ENCODE measurements at regions of chr1 and their contacts with region 1.

Region 1: DNA sequence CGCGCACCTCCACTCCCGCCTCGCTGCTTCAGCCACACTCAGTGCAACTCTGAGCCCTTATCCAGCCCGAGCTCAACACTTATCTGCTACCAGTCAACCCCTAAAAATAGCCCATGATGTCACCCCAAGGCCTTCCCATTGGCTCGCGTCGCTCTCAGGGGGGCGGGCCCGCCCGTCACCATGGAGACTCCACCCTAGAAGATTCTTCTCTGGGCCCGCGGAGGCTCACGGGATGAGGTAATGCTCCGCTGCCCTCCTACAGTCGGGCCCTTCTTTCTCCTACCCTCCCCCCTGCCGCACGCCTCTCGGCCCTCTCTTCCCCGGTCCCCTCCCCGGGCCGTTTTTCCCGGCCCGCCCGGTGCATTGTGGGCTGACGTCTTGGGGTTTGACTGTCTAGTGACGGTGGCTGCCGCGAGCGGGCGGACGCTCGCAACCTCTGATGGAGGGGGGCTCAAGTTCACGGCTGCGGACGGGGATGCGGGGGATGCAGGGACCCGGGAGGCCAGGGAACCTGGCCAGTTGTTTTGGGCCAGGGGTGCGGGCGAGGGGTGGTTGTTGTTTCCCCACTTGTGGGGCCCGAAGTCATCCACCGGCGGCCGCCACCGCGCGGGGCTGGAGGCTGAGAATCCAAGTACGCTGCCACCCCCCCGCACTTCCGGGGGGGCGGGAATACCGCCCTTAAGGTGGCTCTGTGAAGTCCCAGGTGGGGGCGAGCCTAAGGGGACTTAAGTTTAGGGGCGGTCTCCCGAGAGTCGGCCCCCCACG is at the start of gene JUN:
- DNase-seq: peak; percentile 97
- ATAC-seq: peak; percentile 84
- H3K4me3 ChIP-seq: peak within 1 kb of the TSS; percentile 86
- H3K27ac ChIP-seq: peak within 1 kb of the TSS; percentile 90
- H3K4me1 ChIP-seq: peaks cover 11% of the 10 kb centered on the region
- H3K27me3 ChIP-seq: no peaks in the 10 kb centered on the region
- CTCF ChIP-seq: 0 out of 6 replicates have a peak, but pooled peaks of 1 of the 3 experiments have one; percentile 1
- EP300 ChIP-seq: peak in 1 of 2 experiments; percentile 62; a peak in 2 of 4 replicates
- POLR2A ChIP-seq: peak; percentile 99
- RAD21 ChIP-seq: no peak
- polyA plus RNA-seq, gene JUN: 0.18 to 0.37 TPM

Region 2: GRCh38 chr1:58611861-58612385 is 172.3 kb before region 1 on chr1:
- CTCF ChIA-PET with region 1: no interaction called
- POLR2A ChIA-PET with region 1: no interaction called
- RAD21 ChIA-PET with region 1: no interaction called
- SMC1A ChIA-PET with region 1: no interaction called
- in situ Hi-C with region 1: no loop called
- intact Hi-C with region 1: no loop called
- DNase-seq: no peak
- ATAC-seq: no peak
- H3K4me3 ChIP-seq: no peak overlapping the region
- H3K27ac ChIP-seq: no peak overlapping the region
- H3K4me1 ChIP-seq: no peaks in the 10 kb centered on the region
- H3K27me3 ChIP-seq: no peaks in the 10 kb centered on the region; a peak in 1 of 4 replicates
- CTCF ChIP-seq: no peak
- EP300 ChIP-seq: no peak
- POLR2A ChIP-seq: no peak
- RAD21 ChIP-seq: no peak

Region 3: GRCh38 chr1:58748666-58749065 is 35.5 kb before region 1 on chr1:
- CTCF ChIA-PET with region 1: no interaction called
- POLR2A ChIA-PET with region 1: no interaction called
- RAD21 ChIA-PET with region 1: no interaction called
- SMC1A ChIA-PET with region 1: no interaction called
- in situ Hi-C with region 1: no loop called
- intact Hi-C with region 1: no loop called
- DNase-seq: no peak
- ATAC-seq: no peak
- H3K4me3 ChIP-seq: no peak overlapping the region
- H3K27ac ChIP-seq: no peak overlapping the region
- H3K4me1 ChIP-seq: no peaks in the 10 kb centered on the region
- H3K27me3 ChIP-seq: peaks cover 0 to 3% of the 10 kb centered on the region in 2 experiments; a peak in 2 of 4 replicates
- CTCF ChIP-seq: no peak
- EP300 ChIP-seq: no peak
- POLR2A ChIP-seq: no peak
- RAD21 ChIP-seq: no peak

Region 4: GRCh38 chr1:58857680-58858673 is 73.8 kb after region 1 on chr1:
- CTCF ChIA-PET with region 1: interaction called, 6 read pairs
- POLR2A ChIA-PET with region 1: interaction called, 3 read pairs
- RAD21 ChIA-PET with region 1: interaction called, 10 read pairs
- SMC1A ChIA-PET with region 1: interaction called, 8 read pairs
- in situ Hi-C with region 1: no loop called
- intact Hi-C with region 1: loop called (anchors 2 kb)
- DNase-seq: peak; percentile 67
- ATAC-seq: peak; percentile 92
- H3K4me3 ChIP-seq: no peak overlapping the region
- H3K27ac ChIP-seq: peak overlapping the region; percentile 27; the same call in 1 of the 2 replicates
- H3K4me1 ChIP-seq: peaks cover 34% of the 10 kb centered on the region
- H3K27me3 ChIP-seq: no peaks in the 10 kb centered on the region
- CTCF ChIP-seq: no peak
- EP300 ChIP-seq: peak in 1 of 2 experiments; percentile 40; a peak in 1 of 4 replicates
- POLR2A ChIP-seq: no peak
- RAD21 ChIP-seq: no peak

Region 5: DNA sequence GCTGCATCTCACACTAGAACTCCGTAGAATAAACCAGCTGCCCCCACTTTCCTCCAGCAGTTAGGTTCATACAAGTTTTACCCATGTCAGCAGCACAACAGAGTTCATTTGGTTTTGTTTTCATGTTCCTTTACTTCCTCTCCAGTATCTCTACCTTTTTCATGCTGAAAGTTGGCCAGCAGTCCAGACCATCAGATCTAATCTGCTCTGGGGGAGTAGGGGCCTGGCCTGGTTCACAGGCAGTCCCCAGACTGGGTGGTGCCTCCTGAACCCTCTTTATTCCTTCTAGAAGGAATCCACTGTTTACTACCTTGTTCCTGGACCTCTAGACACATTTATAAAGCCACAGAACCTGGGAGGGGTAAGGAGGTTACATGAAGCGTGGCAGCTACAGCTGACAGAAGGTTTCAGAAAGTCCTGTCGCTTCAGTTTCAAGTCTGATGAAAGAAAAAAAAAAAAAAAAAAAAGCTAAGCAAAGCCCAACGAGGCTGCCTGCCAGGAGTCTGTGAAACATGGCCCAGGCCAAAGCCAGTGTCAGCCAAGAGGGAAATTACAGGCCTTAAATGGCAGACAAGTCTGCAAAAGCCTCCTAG is 184.3 kb after region 1 on chr1:
- CTCF ChIA-PET with region 1: no interaction called
- POLR2A ChIA-PET with region 1: no interaction called
- RAD21 ChIA-PET with region 1: interaction called, 3 read pairs
- SMC1A ChIA-PET with region 1: interaction called, 6 read pairs
- in situ Hi-C with region 1: no loop called
- intact Hi-C with region 1: loop called (anchors 5 kb)
- DNase-seq: peak; percentile 92
- ATAC-seq: peak; percentile 92
- H3K4me3 ChIP-seq: peak overlapping the region; percentile 58
- H3K27ac ChIP-seq: peak overlapping the region; percentile 94
- H3K4me1 ChIP-seq: peaks cover 27% of the 10 kb centered on the region
- H3K27me3 ChIP-seq: no peaks in the 10 kb centered on the region
- CTCF ChIP-seq: no peak
- EP300 ChIP-seq: peak; percentile 22 to 29; a peak in 1 of 4 replicates
- POLR2A ChIP-seq: peak; percentile 64
- RAD21 ChIP-seq: peak; percentile 37

Region 6: DNA sequence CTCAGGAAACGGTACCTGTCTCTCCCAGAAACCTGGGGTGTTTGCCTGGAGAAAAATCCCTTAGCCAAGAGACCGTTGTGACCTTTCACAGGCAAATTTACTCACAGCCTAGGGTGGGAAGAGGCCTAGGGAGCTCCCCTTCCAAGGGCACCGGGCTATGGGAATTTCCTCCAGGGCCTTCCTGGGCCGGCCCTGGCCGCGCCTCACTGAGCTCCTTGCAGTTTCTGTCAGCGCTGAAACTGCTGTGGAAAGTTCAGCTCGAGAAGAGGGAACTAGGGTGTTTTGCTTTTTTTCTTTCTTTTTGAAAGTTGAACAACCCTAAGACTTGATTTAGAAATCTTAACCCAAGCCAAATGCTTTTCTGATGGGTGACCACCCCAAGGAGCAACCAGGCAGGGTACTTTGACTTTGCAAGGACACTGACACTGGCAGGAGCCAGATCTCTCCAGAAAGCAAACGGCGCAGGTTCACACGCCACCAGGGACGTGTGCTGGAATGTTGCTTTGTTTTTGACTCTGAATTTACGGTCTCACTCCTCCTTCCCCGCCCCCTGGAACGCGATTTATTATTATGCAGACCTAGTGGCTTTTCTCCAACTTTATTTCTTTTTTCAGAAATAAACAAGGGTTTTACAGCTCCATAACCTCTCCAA is 229.2 kb after region 1 on chr1:
- CTCF ChIA-PET with region 1: interaction called, 4 read pairs
- POLR2A ChIA-PET with region 1: interaction called, 3 read pairs
- RAD21 ChIA-PET with region 1: interaction called, 12 read pairs
- SMC1A ChIA-PET with region 1: interaction called, 11 read pairs
- in situ Hi-C with region 1: no loop called
- intact Hi-C with region 1: loop called (anchors 5 kb)
- DNase-seq: no peak
- ATAC-seq: peak; percentile 84
- H3K4me3 ChIP-seq: peak overlapping the region; percentile 62
- H3K27ac ChIP-seq: peak overlapping the region; percentile 84
- H3K4me1 ChIP-seq: peaks cover 42% of the 10 kb centered on the region
- H3K27me3 ChIP-seq: no peaks in the 10 kb centered on the region
- CTCF ChIP-seq: no peak
- EP300 ChIP-seq: 0 out of 4 replicates have a peak, but pooled peaks of 1 of the 2 experiments have one; percentile 34
- POLR2A ChIP-seq: no peak
- RAD21 ChIP-seq: no peak

Region 7: DNA sequence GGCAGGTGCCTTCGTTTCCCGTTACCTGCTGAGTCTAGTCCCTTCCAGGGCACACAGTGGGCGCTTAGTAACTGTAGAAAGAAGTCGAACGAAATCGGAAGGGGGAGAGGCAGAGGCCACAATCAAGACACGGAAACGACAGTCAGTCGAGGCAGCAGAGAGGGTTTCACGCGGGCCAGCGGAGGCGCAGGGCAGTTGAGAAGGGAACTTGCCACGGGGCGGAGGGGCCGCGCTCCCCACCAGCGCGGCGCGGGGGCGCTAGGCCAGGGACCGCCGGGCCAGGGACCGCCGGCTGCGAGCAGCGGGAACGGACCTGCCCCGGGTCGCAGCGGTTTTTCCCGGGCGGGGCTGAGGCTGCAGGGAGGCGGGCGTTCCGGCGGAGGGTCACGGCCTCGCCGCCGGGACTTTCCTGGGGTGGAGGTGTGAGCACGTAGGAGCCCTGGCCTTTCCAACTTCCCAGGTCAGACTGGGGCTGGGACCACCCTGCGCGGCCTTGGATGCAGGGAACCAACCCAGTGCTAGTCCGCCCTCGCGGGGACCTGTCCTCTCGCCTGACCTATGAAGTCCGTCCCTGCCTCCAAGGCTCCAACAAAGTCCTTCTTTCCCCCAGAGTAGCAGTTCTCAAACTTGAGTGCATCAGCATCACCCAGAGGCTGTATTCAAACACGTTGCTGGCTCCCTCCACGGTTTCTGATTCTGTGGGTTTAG is 362.6 kb after region 1 on chr1:
- CTCF ChIA-PET with region 1: no interaction called
- POLR2A ChIA-PET with region 1: interaction called, 3 read pairs
- RAD21 ChIA-PET with region 1: interaction called, 3 read pairs
- SMC1A ChIA-PET with region 1: no interaction called
- in situ Hi-C with region 1: no loop called
- intact Hi-C with region 1: loop called (anchors 2 kb)
- DNase-seq: no peak
- ATAC-seq: peak; percentile 87
- H3K4me3 ChIP-seq: peak overlapping the region; percentile 62
- H3K27ac ChIP-seq: peak overlapping the region; percentile 60
- H3K4me1 ChIP-seq: peaks cover 32% of the 10 kb centered on the region
- H3K27me3 ChIP-seq: no peaks in the 10 kb centered on the region
- CTCF ChIP-seq: peak in 2 of 3 experiments; percentile 1 to 18; a peak in 1 of 6 replicates
- EP300 ChIP-seq: no peak
- POLR2A ChIP-seq: peak; percentile 73
- RAD21 ChIP-seq: peak; percentile 41

Region 8: GRCh38 chr1:59759156-59759925 is 975.2 kb after region 1 on chr1:
- CTCF ChIA-PET with region 1: interaction called, 6 read pairs
- POLR2A ChIA-PET with region 1: no interaction called
- RAD21 ChIA-PET with region 1: interaction called, 10 read pairs
- SMC1A ChIA-PET with region 1: interaction called, 3 read pairs
- in situ Hi-C with region 1: no loop called
- intact Hi-C with region 1: no loop called
- DNase-seq: peak; percentile 46
- ATAC-seq: peak; percentile 98
- H3K4me3 ChIP-seq: no peak overlapping the region
- H3K27ac ChIP-seq: no peak overlapping the region
- H3K4me1 ChIP-seq: no peaks in the 10 kb centered on the region
- H3K27me3 ChIP-seq: no peaks in the 10 kb centered on the region
- CTCF ChIP-seq: peak; percentile 91 to 97 (median 96)
- EP300 ChIP-seq: no peak
- POLR2A ChIP-seq: no peak
- RAD21 ChIP-seq: peak; percentile 98